MCF 10A (cell line): ENCODE measurements at regions of chr3 and their contacts with region 1.

Region 1: GRCh38 chr3:37945807-37946530 is 44.6 kb upstream of the VILL start:
- DNase-seq: peak; percentile 88
- H3K4me3 Mint-ChIP-seq: peak overlapping the region; percentile 65
- H3K27ac Mint-ChIP-seq: peak overlapping the region; percentile 90
- H3K4me1 Mint-ChIP-seq: peaks cover 42% of the 10 kb centered on the region
- H3K27me3 Mint-ChIP-seq: no peaks in the 10 kb centered on the region
- CTCF ChIP-seq: no peak

Region 2: GRCh38 chr3:37474901-37475331 is 471.1 kb before region 1 on chr3:
- CTCF ChIA-PET with region 1: no interaction called
- POLR2A ChIA-PET with region 1: no interaction called
- intact Hi-C with region 1: no loop called
- DNase-seq: peak; percentile 4
- H3K4me3 Mint-ChIP-seq: no peak overlapping the region
- H3K27ac Mint-ChIP-seq: no peak overlapping the region
- H3K4me1 Mint-ChIP-seq: no peaks in the 10 kb centered on the region
- H3K27me3 Mint-ChIP-seq: peaks cover 40% of the 10 kb centered on the region
- CTCF ChIP-seq: no peak

Region 3: DNA sequence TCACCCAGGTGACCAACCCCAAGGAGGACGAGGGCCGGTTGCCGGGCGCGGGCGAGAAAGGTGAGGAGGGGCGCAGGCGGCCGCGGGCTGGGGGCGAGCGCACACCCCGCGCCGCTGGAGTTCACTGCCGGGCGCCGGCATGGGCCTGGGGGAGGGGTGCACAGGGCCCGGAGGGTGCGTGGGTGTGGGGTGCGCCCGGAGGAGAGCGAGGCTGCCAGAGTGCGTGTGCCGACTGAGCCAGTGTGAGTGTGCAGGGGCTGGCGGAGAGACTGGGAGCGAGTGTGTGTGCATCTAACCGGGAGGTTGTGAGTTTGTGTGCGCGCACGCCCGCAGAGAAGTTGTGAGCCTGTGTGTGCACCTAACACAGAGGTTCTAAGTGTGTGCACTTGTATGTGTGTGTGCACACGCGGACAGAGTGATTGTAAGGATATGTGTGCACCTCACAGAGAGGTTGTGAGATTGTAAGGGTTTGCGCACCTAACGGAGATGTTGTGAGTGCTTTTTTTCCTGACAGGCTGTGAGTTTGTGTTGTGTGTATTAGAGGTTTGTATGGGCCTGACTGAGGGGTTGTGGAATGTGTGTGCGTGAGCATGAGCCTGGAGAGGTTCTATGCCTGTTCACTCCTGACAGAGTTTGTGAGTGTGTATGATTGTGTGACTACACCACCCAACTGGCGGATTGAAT is 83.6 kb before region 1 on chr3:
- CTCF ChIA-PET with region 1: interaction called, 5 read pairs
- POLR2A ChIA-PET with region 1: interaction called, 12 read pairs
- intact Hi-C with region 1: no loop called
- DNase-seq: peak; percentile 50
- H3K4me3 Mint-ChIP-seq: peak overlapping the region; percentile 78
- H3K27ac Mint-ChIP-seq: peak overlapping the region; percentile 2
- H3K4me1 Mint-ChIP-seq: peaks cover 24% of the 10 kb centered on the region
- H3K27me3 Mint-ChIP-seq: no peaks in the 10 kb centered on the region
- CTCF ChIP-seq: no peak

Region 4: DNA sequence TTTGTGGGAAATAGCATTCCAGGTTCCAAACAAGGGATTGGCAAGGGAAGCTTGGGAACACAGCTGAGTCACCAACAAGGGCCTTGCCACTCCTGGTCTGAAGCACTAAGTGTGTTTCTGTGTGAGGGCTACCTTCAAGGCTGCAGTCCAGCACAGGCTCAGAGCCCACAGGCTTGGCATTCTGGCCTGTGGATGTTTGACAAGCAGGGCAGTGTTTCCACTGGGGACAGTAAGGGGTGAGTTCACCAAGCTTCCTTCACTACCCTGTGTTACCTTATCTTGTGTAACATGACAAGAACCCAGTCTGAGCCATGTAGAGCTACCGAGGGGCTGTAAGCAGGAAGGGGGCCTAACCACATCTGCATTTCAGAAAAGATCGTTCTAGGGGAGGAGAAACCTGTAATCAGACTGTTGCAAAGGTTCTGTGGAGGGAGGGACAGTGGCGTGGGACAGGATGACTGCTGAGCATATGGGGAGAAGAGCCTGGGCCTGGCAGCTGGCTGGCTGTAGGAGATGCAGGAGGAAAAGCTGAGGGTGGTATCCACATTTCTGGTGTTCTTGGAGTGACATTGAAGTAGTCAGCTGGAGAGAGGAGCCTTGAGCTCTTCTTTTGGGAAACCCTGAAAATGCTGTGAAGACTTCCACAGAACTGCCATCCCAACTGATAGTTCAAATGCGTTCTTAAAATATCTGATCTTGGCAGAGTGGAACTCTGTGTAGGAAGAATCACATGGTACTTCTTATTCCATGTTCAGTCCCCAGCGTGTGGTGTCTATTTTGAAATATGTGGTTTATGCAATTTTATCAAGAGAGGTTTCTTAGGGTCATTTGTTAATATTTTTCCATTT is 23.0 kb before region 1 on chr3:
- CTCF ChIA-PET with region 1: interaction called, 3 read pairs
- POLR2A ChIA-PET with region 1: interaction called, 12 read pairs
- intact Hi-C with region 1: no loop called
- DNase-seq: peak; percentile 54
- H3K4me3 Mint-ChIP-seq: no peak overlapping the region
- H3K27ac Mint-ChIP-seq: peak overlapping the region; percentile 40
- H3K4me1 Mint-ChIP-seq: peaks cover 34% of the 10 kb centered on the region
- H3K27me3 Mint-ChIP-seq: no peaks in the 10 kb centered on the region
- CTCF ChIP-seq: no peak